Astrocyte of the cerebellum (primary cell): ENCODE measurements at regions of chr9 and their contacts with region 1.

Region 1: GRCh38 chr9:20125727-20126126 is 336.9 kb upstream of the SLC24A2 start:
- DNase-seq: no peak
- H3K4me3 ChIP-seq: no peak overlapping the region
- CTCF ChIP-seq: no peak

Region 2: GRCh38 chr9:20092560-20092959 is 33.2 kb before region 1 on chr9:
- in situ Hi-C with region 1: loop called (anchors 5 kb)
- DNase-seq: no peak
- H3K4me3 ChIP-seq: no peak overlapping the region
- CTCF ChIP-seq: no peak

Region 3: GRCh38 chr9:20271096-20271495 is 145.4 kb after region 1 on chr9:
- in situ Hi-C with region 1: no loop called
- DNase-seq: no peak
- H3K4me3 ChIP-seq: no peak overlapping the region
- CTCF ChIP-seq: no peak